ENCODE measurements at regions of chr4 and their contacts with region 1.

Region 1: GRCh38 chr4:95284671-95285070 is 264.1 kb downstream of the UNC5C start:
- DNase-seq: no peak
- H3K4me3 ChIP-seq: no peak overlapping the region
- CTCF ChIP-seq: no peak
- POLR2A ChIP-seq: no peak

Region 2: GRCh38 chr4:93605163-93605562 is 1679.5 kb before region 1 on chr4:
- intact Hi-C with region 1: no loop called
- DNase-seq: no peak
- H3K4me3 ChIP-seq: no peak overlapping the region
- CTCF ChIP-seq: no peak
- POLR2A ChIP-seq: no peak

Region 3: GRCh38 chr4:95255396-95256107 is 29.1 kb before region 1 on chr4:
- intact Hi-C with region 1: loop called (anchors 1 kb)
- DNase-seq: no peak
- H3K4me3 ChIP-seq: no peak overlapping the region
- CTCF ChIP-seq: no peak
- POLR2A ChIP-seq: no peak